GM10248 (cell line): ENCODE measurements at regions of chr2 and their contacts with region 1.

Region 1: GRCh38 chr2:192162392-192163042 is 32.2 kb downstream of the TMEFF2 start:
- DNase-seq: peak; percentile 17
- CTCF ChIP-seq: peak; percentile 87

Region 2: GRCh38 chr2:191544461-191545062 is 618.0 kb before region 1 on chr2:
- CTCF ChIA-PET with region 1: interaction called, 15 read pairs
- POLR2A ChIA-PET with region 1: no interaction called
- DNase-seq: no peak
- CTCF ChIP-seq: no peak

Region 3: DNA sequence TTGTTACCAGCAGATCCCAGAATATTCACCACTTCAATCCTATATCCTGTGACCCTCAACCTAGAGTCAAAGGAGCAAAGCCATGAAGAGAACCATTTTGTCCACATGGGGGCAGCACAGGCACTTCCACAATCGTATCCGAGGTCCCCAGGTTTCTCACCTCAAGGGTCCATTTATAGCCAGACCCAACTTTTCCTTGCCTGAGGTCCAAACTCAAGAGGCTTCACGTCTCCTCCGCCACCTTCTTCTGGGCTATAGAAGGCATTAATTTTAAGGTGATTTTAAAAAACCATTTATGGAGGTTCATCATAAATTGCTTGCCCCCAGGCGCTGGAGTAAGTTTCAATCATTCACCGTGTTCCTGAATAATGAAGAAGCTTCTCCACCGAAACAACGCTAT is 596.2 kb before region 1 on chr2:
- CTCF ChIA-PET with region 1: interaction called, 101 read pairs
- POLR2A ChIA-PET with region 1: no interaction called
- DNase-seq: peak; percentile 55
- CTCF ChIP-seq: peak; percentile 65

Region 4: DNA sequence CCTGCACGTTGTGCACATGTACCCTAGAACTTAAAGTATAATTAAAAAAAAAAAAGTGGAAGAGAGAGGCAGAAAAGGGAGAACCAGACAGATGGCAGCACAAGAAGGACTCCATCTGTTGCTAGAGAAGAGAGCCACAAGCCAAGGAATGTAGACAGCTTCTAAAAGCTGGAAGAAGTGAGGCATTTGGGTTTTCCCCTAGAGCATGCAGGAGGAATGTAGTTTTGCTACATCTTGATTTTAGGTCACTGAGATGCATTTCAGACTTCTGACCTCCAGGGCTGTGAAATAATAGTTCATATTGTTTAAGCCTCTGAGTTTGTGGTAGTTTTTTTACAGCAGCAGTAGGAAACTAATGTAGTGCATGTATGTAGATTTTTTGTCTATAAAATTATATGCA is 361.6 kb before region 1 on chr2:
- CTCF ChIA-PET with region 1: interaction called, 10 read pairs
- POLR2A ChIA-PET with region 1: no interaction called
- DNase-seq: no peak
- CTCF ChIP-seq: no peak

Region 5: GRCh38 chr2:191846515-191847476 is 315.7 kb before region 1 on chr2 and contains the start of gene CAVIN2:
- CTCF ChIA-PET with region 1: interaction called, 12 read pairs
- POLR2A ChIA-PET with region 1: no interaction called
- DNase-seq: no peak
- CTCF ChIP-seq: no peak

Region 6: GRCh38 chr2:191950132-191950874 is 212.2 kb before region 1 on chr2:
- CTCF ChIA-PET with region 1: no interaction called
- POLR2A ChIA-PET with region 1: no interaction called
- DNase-seq: no peak
- CTCF ChIP-seq: no peak

Region 7: GRCh38 chr2:192140236-192140839 is 22.2 kb before region 1 on chr2:
- CTCF ChIA-PET with region 1: interaction called, 16 read pairs
- POLR2A ChIA-PET with region 1: no interaction called
- DNase-seq: no peak
- CTCF ChIP-seq: no peak

Region 8: GRCh38 chr2:192288295-192288694 is 125.8 kb after region 1 on chr2:
- CTCF ChIA-PET with region 1: no interaction called
- POLR2A ChIA-PET with region 1: no interaction called
- DNase-seq: no peak
- CTCF ChIP-seq: no peak